H1 (cell line): ENCODE measurements at regions of chr14 and their contacts with region 1.

Region 1: GRCh38 chr14:76784266-76785264 is 23.3 kb downstream of the VASH1 start:
- DNase-seq: peak; percentile 58 to 91
- H3K4me3 ChIP-seq: no peak overlapping the region
- H3K27ac ChIP-seq: no peak overlapping the region
- H3K4me1 ChIP-seq: no peaks in the 10 kb centered on the region
- H3K27me3 ChIP-seq: no peaks in the 10 kb centered on the region
- CTCF ChIP-seq: peak; percentile 94 to 99 (median 98)
- EP300 ChIP-seq: no peak
- POLR2A ChIP-seq: no peak
- RAD21 ChIP-seq: peak; percentile 82 to 85

Region 2: GRCh38 chr14:76701981-76702380 is 82.6 kb before region 1 on chr14:
- CTCF ChIA-PET with region 1: interaction called, 234 read pairs
- POLR2A ChIA-PET with region 1: no interaction called
- DNase-seq: no peak
- H3K4me3 ChIP-seq: no peak overlapping the region
- H3K27ac ChIP-seq: no peak overlapping the region
- H3K4me1 ChIP-seq: no peaks in the 10 kb centered on the region
- H3K27me3 ChIP-seq: no peaks in the 10 kb centered on the region
- CTCF ChIP-seq: no peak
- EP300 ChIP-seq: no peak
- POLR2A ChIP-seq: no peak
- RAD21 ChIP-seq: no peak

Region 3: DNA sequence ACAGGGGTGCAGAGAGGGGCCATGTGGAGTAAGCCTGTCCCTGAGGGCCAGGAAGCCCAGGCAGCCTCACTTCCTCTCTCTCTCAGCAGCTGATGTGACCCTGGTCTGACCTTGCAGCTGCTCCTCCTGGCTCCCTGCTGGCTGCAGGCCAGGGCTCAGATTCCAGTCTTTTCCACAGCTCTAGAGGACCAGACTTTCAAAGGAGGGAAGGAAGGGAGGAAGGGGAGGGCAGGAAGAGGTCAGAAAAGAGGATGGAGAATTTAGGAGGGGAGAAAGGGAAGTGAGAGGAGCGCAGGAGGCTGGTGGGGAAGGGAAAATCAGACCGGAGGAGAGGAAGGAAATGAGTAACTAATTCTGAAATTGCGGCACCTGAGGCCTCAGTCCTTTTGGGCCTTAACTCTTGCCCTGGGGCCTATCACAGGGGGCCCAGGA is 64.2 kb before region 1 on chr14:
- CTCF ChIA-PET with region 1: interaction called, 46 read pairs
- POLR2A ChIA-PET with region 1: interaction called, 5 read pairs
- DNase-seq: no peak
- H3K4me3 ChIP-seq: no peak overlapping the region
- H3K27ac ChIP-seq: no peak overlapping the region
- H3K4me1 ChIP-seq: peaks cover 0 to 8% (median 3%) of the 10 kb centered on the region in 4 experiments; a peak in 3 of 7 replicates
- H3K27me3 ChIP-seq: no peaks in the 10 kb centered on the region
- CTCF ChIP-seq: no peak
- EP300 ChIP-seq: no peak
- POLR2A ChIP-seq: no peak
- RAD21 ChIP-seq: no peak

Region 4: DNA sequence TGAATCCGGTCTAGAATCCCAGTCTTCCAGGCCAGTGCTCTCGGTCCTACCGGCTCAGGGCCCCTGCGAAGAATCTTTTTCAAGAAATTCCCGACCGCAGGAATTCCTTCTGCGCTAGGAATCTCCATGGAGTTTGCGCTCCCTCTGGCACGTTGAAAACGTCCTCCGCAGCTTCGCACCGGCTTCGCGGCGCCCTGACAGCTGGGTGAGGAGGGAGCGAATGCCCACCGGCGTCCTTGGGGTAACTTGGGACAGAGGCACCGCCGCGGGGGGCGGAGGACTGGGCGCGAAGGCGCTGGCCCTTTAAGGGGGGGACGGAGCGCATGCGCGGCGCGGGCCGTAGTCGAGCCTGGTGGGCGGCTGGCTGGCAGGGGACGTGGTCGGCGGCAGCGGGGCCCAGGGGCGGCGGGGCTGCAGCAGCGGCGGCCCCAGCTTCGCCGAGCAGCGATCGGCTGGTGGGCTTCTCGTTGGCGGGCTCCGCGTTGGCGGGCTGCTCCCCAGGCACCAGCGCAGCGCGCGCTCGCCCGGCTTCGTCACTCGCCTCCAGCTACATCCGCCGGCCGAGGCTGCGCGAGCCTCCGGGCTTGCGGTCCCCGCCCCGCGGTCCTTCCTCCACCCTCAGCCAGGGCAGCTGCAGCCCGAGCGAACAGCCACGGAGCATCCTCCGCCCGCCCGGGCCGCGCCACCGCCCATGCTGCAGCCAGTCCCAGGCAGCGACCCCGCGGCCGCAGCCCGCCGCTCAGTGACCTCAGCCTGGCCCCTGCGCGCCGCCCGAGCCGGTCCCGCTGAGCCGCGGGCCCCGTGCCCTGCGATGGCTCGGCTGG is 23.2 kb before region 1 on chr14 and contains the start of gene VASH1:
- CTCF ChIA-PET with region 1: interaction called, 128 read pairs
- POLR2A ChIA-PET with region 1: interaction called, 11 read pairs
- DNase-seq: peak in 1 of 2 experiments; percentile 86
- H3K4me3 ChIP-seq: peak within 1 kb of the TSS; percentile 52 to 66 (median 59)
- H3K27ac ChIP-seq: no peak within 1 kb of the TSS
- H3K4me1 ChIP-seq: peaks cover 0 to 13% (median 2%) of the 10 kb centered on the region in 4 experiments; a peak in 5 of 7 replicates
- H3K27me3 ChIP-seq: peaks cover 24 to 52% (median 41%) of the 10 kb centered on the region in 4 experiments
- CTCF ChIP-seq: no peak
- EP300 ChIP-seq: no peak
- POLR2A ChIP-seq: no peak
- RAD21 ChIP-seq: no peak
- total RNA-seq, gene VASH1: 6.4 and 7.7 TPM in 2 replicates

Region 5: DNA sequence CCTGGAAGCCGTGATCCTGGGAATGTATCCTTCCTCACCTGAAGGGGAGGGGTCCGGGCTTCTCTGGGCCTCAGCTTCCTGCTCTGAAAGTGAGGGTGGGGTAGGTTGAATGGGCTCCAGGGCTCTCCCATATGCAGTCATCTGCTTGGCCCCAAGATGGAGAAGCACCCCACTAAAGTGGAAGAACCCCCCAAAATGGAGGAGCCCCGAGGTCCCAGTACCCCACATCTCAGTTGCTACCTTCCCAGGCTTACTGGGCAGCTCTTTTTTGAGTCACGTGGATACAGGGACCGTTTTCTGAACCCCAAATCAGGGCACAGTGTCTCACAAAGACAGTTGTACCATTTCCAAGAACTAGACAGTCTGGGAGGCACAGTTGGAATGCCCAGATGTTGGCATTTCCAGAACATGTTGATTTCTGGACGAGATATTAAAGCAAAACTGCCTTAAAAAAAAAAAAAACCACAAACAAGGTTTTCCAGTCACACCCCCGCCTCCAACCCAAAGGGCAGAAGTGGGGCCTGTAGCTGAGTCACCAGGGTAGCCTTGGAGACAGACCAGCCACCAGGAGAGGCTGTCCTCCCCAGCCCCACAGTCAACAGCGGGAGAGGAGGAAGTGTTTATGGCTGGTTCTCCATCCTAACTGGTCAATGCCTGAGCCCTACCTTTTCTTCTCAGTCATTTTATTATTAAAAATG is 11.2 kb before region 1 on chr14:
- CTCF ChIA-PET with region 1: interaction called, 128 read pairs
- POLR2A ChIA-PET with region 1: interaction called, 20 read pairs
- DNase-seq: no peak
- H3K4me3 ChIP-seq: no peak overlapping the region
- H3K27ac ChIP-seq: no peak overlapping the region
- H3K4me1 ChIP-seq: peaks cover 0 to 21% (median 11%) of the 10 kb centered on the region in 4 experiments; a peak in 5 of 7 replicates
- H3K27me3 ChIP-seq: peaks cover 0 to 5% (median 2%) of the 10 kb centered on the region in 4 experiments; a peak in 4 of 7 replicates
- CTCF ChIP-seq: no peak
- EP300 ChIP-seq: no peak
- POLR2A ChIP-seq: no peak
- RAD21 ChIP-seq: no peak

Region 6: GRCh38 chr14:76812211-76813044 is 27.9 kb after region 1 on chr14 and contains the start of gene ANGEL1:
- CTCF ChIA-PET with region 1: interaction called, 52 read pairs
- POLR2A ChIA-PET with region 1: interaction called, 8 read pairs
- DNase-seq: peak; percentile 82 to 97
- H3K4me3 ChIP-seq: peak within 1 kb of the TSS; percentile 74 to 82 (median 80)
- H3K27ac ChIP-seq: peak within 1 kb of the TSS; percentile 76
- H3K4me1 ChIP-seq: peaks cover 2 to 9% (median 3%) of the 10 kb centered on the region in 4 experiments; a peak in 3 of 7 replicates
- H3K27me3 ChIP-seq: no peaks in the 10 kb centered on the region; a peak in 2 of 7 replicates
- CTCF ChIP-seq: no peak
- EP300 ChIP-seq: peak; percentile 6 to 88; a peak in 2 of 3 replicates
- POLR2A ChIP-seq: peak; percentile 76 to 90
- RAD21 ChIP-seq: no peak
- total RNA-seq, gene ANGEL1: 23.1 and 26.8 TPM in 2 replicates